Calu3 (cell line): ENCODE measurements at regions of chr7 and their contacts with region 1.

Region 1: GRCh38 chr7:116340943-116341907 is 130.9 kb downstream of the TES start:
- DNase-seq: no peak
- H3K4me3 Mint-ChIP-seq: no peak overlapping the region
- H3K27ac Mint-ChIP-seq: no peak overlapping the region
- H3K4me1 Mint-ChIP-seq: peaks cover 30% of the 10 kb centered on the region
- H3K27me3 Mint-ChIP-seq: no peaks in the 10 kb centered on the region
- CTCF ChIP-seq: no peak

Region 2: GRCh38 chr7:116258734-116259133 is 82.5 kb before region 1 on chr7:
- CTCF ChIA-PET with region 1: interaction called, 4 read pairs
- intact Hi-C with region 1: loop called (anchors 1 kb)
- DNase-seq: peak; percentile 54
- H3K4me3 Mint-ChIP-seq: no peak overlapping the region
- H3K27ac Mint-ChIP-seq: peak overlapping the region; percentile 69
- H3K4me1 Mint-ChIP-seq: peaks cover 20% of the 10 kb centered on the region
- H3K27me3 Mint-ChIP-seq: no peaks in the 10 kb centered on the region
- CTCF ChIP-seq: peak; percentile 53